ENCODE measurements at regions of chr5 and their contacts with region 1.

Region 1: DNA sequence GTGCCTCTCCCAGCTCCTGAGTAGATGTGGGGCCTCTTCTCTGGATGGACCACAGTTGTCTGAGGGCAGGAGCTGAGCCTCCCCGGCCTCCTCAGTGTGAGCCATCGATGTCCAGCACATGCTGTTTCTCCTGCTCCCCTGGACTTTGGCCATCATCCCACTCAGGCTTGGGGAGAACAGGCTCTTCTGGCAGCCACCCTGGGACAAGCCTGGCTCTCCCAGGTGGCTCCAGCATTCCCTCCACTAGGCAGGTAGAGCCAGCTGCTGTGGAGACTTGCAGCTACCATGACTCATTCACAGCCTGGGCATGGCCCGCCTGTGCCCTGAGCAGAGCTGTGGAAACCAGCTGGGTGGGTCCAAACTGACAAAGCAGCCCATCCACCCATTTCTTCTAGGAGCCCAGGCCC is 77.0 kb downstream of the CSNK1A1 start:
- DNase-seq: no peak
- H3K4me3 ChIP-seq: no peak overlapping the region
- H3K27ac ChIP-seq: no peak overlapping the region
- H3K4me1 ChIP-seq: 0 out of 7 replicates have a peak, but pooled peaks cover 0 to 2% (median 0%) of the 10 kb centered on the region in 4 experiments
- H3K27me3 ChIP-seq: no peaks in the 10 kb centered on the region
- CTCF ChIP-seq: no peak
- EP300 ChIP-seq: no peak
- POLR2A ChIP-seq: no peak
- RAD21 ChIP-seq: no peak

Region 2: DNA sequence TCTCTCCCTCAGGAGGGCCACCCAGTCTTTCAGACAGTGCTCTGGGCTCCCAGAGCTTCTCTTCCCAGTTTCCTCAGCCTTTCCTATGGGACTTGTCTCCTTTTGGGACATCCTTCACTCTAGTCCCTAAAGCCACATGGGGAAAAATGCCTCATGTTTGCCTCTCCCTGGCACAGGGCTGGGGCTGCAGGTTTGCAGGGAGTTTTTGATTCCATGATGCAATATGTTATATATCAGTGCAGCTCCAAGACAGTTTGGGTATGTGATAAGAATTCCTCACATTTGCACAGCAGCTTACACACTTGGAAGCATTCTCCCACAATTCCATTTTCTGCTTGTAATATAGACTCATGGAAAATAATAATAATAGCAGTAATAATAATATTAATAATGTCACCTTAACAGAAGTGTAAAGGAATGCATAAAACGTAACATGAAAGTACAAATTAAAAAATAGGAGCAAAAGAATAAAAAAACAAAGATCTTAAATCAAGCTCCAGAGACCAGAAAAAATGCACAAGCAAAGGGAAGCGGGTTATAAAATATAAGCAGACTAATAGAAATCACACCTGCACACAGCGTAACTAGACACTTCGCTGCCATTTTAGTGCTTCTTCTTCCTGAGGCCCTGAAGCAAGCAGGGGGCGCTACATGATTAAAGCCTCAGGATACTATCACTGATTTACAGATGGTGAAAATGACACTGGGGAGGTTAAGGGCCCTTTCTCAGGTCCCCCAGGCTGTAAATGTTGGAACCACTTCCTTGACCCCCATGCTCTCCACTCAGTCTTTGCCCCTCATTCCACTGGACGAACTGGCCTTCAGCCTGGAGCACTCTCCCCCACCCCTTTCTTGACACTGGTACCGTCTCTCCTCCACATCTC is 25.1 kb before region 1 on chr5:
- CTCF ChIA-PET with region 1: interaction called, 25 read pairs
- POLR2A ChIA-PET with region 1: interaction called, 3 read pairs
- DNase-seq: no peak
- H3K4me3 ChIP-seq: no peak overlapping the region
- H3K27ac ChIP-seq: no peak overlapping the region
- H3K4me1 ChIP-seq: peaks cover 0 to 19% (median 8%) of the 10 kb centered on the region in 4 experiments; a peak in 6 of 7 replicates
- H3K27me3 ChIP-seq: no peaks in the 10 kb centered on the region
- CTCF ChIP-seq: peak; percentile 17 to 67 (median 45); a peak in 3 of 4 replicates
- EP300 ChIP-seq: no peak
- POLR2A ChIP-seq: no peak
- RAD21 ChIP-seq: peak; percentile 62 to 69

Region 3: GRCh38 chr5:149485655-149486425 is 11.6 kb after region 1 on chr5:
- CTCF ChIA-PET with region 1: interaction called, 11 read pairs
- POLR2A ChIA-PET with region 1: interaction called, 38 read pairs
- DNase-seq: no peak
- H3K4me3 ChIP-seq: no peak overlapping the region
- H3K27ac ChIP-seq: no peak overlapping the region
- H3K4me1 ChIP-seq: no peaks in the 10 kb centered on the region
- H3K27me3 ChIP-seq: no peaks in the 10 kb centered on the region
- CTCF ChIP-seq: no peak
- EP300 ChIP-seq: no peak
- POLR2A ChIP-seq: no peak
- RAD21 ChIP-seq: no peak

Region 4: DNA sequence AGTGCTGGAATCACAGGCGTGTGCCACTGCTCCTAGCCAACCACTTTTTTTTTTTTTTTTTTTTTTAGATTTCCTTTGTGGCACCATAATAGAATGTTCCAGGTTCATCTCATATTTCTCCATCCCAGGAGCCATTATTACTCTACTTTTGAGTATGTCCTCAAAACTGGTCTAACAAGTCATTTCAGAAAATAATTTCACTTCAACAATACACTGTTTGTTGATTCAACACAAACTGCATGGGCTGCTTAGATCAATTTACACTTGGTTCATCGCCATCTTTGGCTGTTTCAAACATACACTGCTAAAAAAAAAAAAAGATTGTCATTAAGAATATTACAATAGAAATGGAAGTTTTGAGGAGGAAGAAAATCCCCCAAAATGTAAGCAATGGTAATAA is 19.1 kb after region 1 on chr5:
- CTCF ChIA-PET with region 1: no interaction called
- POLR2A ChIA-PET with region 1: interaction called, 38 read pairs
- DNase-seq: no peak
- H3K4me3 ChIP-seq: no peak overlapping the region
- H3K27ac ChIP-seq: no peak overlapping the region
- H3K4me1 ChIP-seq: peaks cover 0 to 5% (median 0%) of the 10 kb centered on the region in 4 experiments; a peak in 2 of 7 replicates
- H3K27me3 ChIP-seq: peaks cover 0 to 1% (median 0%) of the 10 kb centered on the region in 4 experiments; a peak in 1 of 7 replicates
- CTCF ChIP-seq: no peak
- EP300 ChIP-seq: no peak
- POLR2A ChIP-seq: no peak
- RAD21 ChIP-seq: no peak

Measured in H1 (cell line).